Sciatic nerve (tissue), 2 donors: ENCODE measurements at regions of chr22 and their contacts with region 1.

Region 1: GRCh38 chr22:35749808-35750207 is 32.1 kb downstream of the APOL5 start:
- DNase-seq: no peak
- ATAC-seq: peak; percentile 50

Region 2: DNA sequence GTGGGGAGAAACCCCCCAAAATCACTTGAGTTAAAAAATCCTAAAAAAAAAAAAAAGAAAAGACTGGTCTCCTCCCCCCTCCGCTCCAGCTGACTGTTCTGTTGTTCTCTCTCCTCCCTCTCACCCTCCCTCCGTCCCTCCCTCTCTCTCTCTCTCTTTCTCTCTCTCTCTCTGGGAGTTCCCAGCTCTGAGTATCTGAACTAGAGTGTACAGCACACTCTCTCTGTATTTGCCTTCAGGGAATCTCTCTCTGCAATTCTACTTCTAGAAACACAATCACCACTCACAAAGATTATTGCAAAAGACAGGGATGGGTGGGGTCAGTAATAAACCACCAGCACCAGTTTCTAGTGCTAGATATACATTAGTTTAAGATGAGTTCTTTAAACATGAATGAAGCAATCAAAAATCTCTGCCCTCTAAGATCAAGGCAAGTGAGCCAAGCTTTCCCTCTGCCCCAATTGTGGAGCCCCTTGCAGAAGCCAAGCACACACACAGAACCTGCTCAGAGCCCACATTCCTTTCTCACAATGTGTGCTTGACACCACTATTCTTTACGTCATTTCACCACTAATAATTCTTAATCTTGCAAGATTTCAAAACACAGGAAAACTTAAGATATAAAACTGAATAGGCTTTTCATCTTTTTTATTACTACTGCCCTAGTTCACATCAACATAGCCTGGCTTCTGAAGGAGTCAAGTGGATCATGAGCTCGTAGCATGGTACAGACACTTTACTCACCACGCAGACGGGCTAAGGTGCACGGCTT is 145.3 kb after region 1 on chr22:
- intact Hi-C with region 1: no loop called
- DNase-seq: no peak
- ATAC-seq: peak; percentile 97

Region 3: DNA sequence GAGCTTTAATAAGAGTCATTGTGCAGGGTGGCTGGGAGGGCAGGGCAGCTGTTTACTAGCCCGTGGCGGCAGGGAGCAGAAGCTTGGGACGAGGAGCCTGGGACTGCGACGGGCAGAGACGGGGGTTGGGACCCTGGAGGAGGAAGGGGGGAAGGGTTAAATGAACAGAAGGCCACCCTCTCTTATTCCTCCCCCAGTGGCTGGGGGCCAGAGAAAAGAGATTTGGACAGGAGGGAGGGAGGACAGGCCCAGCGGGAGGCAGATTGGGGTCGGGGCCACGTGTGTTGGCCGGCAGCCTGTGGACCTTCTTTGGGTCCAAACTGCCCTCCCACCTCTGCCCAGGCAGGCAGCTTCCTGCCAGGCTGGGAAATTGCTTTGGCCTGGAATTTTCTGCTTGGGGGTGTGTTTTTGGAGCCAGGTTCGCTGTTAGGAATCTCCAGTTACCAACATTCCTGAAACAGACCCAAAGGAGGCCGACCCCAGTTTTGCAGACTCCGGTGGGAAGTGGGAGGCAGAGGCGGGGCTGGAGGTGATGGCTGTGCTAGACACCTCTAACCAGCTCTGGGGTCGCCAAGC is 360.6 kb after region 1 on chr22:
- intact Hi-C with region 1: loop called (anchors 5 kb)
- DNase-seq: no peak
- ATAC-seq: peak; percentile 15

Region 4: DNA sequence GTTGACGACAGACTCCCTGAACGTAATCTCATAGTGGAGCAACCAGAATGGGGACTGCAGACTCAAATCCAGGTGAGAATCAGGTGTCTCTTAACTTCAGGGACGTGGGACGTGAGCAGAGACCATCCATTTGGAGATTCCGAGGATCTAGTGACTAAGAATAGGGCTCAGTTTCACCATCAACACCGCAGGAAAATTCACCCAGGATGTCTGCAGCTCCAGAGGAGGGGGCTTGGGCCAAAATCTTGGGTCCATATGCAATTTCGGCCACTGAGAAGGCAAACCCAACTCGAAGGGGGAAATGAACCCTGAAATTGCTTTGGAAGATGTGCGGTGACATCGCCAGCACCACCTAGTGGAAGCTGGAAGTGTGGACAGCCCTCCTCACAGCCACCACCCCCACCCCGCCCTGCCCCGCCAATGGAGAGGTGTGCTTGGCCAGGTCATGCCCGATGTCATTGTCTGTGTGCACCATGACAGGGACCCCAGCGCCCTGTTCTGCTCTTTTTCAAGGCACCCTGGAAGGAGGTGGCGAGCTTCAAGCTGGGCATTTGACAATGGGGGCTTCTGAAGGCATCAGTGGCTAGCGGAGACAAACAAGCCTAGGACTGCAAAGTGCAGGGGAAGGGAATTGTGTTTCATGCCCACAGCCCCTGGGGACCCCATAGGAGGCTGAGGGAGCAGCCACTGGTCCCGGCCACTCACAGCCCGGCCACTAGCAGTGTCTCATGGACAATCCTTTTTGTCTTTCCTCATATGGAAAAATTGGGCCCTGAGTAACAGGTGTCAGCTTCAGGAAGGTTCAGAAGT is 527.9 kb after region 1 on chr22:
- intact Hi-C with region 1: no loop called
- DNase-seq: peak; percentile 74
- ATAC-seq: peak; percentile 63